Heart left ventricle (tissue), 16 donors: ENCODE measurements at regions of chr3 and their contacts with region 1.

Region 1: GRCh38 chr3:107689355-107689754 is 166.6 kb downstream of the BBX start:
- DNase-seq: no peak
- ATAC-seq: no peak
- H3K4me3 ChIP-seq: no peak overlapping the region
- H3K27ac ChIP-seq: no peak overlapping the region
- H3K4me1 ChIP-seq: peaks cover 0 to 19% (median 6%) of the 10 kb centered on the region in 12 donors
- H3K27me3 ChIP-seq: no peaks in the 10 kb centered on the region
- CTCF ChIP-seq: no peak
- POLR2A ChIP-seq: no peak

Region 2: DNA sequence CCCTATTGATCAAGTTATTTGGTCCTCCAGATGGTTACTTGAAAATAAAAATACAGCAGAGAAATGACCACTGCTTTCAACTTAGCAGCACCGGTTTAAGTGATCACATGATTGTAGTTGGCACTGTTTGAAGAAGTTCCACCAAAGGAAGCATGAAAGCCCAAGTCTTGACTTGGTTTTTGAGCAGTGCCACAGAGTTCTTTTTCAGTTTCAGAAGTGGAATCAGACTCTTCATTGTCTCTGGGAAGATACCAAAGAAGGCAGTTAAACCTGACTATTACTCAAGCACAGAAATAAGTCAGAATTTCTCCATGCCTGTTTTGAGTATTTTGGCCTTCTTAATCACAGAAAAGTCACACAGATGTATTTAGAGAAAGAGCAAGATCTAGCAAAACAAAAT is 99.9 kb before region 1 on chr3:
- intact Hi-C with region 1: no loop called
- DNase-seq: no peak
- ATAC-seq: no peak
- H3K4me3 ChIP-seq: no peak overlapping the region
- H3K27ac ChIP-seq: no peak overlapping the region
- H3K4me1 ChIP-seq: peaks cover 0 to 9% (median 0%) of the 10 kb centered on the region in 12 donors
- H3K27me3 ChIP-seq: no peaks in the 10 kb centered on the region
- CTCF ChIP-seq: no peak
- POLR2A ChIP-seq: no peak

Region 3: DNA sequence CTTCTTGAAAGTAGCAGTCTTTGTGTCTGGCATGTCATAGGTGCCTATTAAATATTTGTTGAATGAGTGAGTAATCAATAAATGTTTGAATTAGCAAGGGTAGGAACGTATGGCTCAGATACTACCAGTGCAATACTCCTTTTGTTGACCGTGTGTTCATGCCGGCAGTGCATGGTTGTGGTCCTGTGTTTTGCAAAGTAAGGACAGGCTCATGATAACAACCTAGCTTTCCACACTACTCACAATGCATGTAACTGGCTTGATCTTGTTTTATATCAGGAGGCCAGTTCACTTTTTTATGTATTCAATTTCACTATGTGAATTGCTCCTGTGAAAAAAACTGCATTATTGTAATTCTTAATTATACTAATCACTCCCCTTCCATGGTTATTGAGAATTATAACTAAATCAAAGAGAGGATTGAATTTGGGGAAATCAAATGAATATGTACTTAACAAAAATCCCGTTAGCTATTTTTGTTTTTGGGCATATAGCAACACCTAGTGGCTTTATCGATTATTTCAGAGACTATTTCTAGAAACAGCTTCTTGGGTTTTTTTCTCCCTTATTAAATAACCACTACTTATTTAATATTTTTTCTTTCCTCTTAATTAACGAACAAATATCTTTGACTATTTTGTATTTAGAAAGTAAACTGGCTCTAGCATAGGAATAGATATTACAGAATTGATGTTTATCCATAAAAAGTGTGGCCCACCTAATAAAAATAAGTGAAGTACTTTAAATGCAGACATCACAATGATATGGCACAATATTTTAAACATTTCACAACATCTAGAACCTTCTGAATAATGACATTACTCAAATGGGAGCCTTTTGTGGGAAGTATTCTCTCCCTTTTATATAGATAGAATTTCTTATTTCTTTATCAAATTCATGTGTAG is 51.9 kb after region 1 on chr3:
- intact Hi-C with region 1: loop called in 4 of 10 experiments (anchors 5 kb)
- DNase-seq: no peak
- ATAC-seq: no peak
- H3K4me3 ChIP-seq: no peak overlapping the region
- H3K27ac ChIP-seq: no peak overlapping the region
- H3K4me1 ChIP-seq: peaks cover 0 to 7% (median 0%) of the 10 kb centered on the region in 12 donors
- H3K27me3 ChIP-seq: no peaks in the 10 kb centered on the region
- CTCF ChIP-seq: peak; percentile 29 to 73 (median 57)
- POLR2A ChIP-seq: no peak